A673 (cell line): ENCODE measurements at regions of chr9 and their contacts with region 1.

Region 1: DNA sequence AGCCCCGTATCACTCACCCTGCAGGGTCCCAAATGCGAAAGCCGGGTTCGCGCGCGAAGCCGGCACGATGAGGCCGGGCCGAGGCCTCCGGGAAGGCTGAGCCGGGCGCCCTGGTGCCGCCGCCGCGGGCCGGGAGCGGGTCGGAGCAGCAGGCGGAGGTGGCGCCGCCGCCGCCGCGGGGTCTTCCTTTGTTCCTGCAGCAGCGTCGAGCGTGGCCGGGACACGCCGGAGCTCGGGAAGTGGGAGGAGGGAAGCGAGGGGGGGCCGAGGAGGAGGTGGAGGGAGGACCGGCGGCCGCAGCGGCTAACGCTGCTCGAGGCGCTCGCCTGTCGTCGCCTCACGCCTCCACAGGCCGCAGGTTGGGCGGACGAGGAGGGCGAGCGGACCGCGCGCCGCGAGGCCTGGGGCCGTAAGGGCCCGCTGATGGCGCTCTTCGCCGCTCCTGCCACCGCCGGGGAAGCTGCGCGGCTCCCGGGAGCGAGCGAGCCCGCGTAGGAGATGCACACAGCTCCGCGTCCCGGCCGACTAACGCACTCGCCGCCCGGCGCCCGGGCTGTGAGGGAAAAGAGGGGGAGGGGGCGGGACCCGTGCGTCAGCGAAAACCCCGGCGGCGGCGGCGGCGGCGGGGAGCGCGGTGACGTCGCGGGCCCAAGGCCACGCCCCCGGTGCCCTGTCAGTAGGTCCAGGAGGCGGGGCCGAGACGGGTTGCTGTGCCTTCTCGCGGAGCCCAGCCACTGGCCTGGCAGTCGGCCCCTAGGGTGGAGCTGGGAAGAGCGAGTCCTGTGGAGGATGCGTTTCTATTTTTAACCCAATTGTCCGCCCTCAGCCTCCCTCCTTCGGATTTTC is at the start of gene ZFAND5:
- DNase-seq: peak; percentile 97
- H3K4me3 ChIP-seq: peak within 1 kb of the TSS; percentile 95
- H3K27ac ChIP-seq: peak within 1 kb of the TSS; percentile 97
- H3K4me1 ChIP-seq: peaks cover 24% of the 10 kb centered on the region
- H3K27me3 ChIP-seq: no peaks in the 10 kb centered on the region
- CTCF ChIP-seq: no peak
- total RNA-seq, gene ZFAND5: 169 and 194 TPM in 2 replicates

Region 2: DNA sequence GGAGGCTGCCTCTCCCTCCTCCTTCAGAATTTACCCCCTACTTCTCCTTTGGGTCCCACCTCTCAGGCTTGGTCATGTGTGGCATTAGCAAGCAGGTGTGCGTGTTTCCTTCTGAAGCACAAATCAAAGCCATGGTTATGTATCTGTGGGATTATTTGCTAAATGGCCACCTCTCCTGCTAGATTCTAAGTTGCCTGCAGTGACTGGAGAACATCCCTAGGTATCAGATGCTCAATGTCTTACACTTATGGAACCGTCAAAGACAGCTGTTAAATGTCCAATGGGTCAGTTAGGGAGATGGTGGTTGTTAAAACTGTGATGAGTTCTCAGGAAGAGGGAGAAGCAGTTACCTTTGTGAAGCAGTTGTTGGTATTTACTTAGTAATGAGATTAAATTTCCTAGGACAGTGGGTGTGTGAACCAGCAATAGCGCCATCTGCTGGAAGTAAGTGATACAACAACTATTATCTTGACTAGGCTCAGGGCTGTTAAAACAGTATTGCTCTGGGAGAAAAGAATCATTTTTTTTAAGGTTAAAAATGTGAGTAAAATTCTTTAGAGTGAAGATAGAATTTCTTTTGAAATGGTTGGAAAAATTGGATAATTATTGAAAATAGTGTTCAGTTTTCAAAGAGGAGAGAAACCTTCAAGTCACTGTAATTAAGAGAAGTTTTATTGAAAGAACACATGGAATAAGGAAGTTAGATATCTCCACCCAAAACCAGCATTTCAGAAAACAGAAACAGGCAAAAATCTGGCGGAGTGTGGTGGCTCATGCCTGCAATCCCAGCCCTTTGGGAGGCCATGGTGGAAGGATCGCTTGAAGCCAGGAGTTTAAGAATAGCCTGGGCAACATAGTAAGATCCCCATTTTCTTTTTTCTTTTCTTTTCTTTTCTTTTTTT is 227.9 kb after region 1 on chr9:
- CTCF ChIA-PET with region 1: no interaction called
- POLR2A ChIA-PET with region 1: interaction called, 4 read pairs
- intact Hi-C with region 1: loop called (anchors 2 kb)
- DNase-seq: peak; percentile 67
- H3K4me3 ChIP-seq: no peak overlapping the region
- H3K27ac ChIP-seq: no peak overlapping the region
- H3K4me1 ChIP-seq: no peaks in the 10 kb centered on the region
- H3K27me3 ChIP-seq: no peaks in the 10 kb centered on the region
- CTCF ChIP-seq: peak; percentile 83

Region 3: GRCh38 chr9:72661401-72662135 is 296.7 kb after region 1 on chr9:
- CTCF ChIA-PET with region 1: no interaction called
- POLR2A ChIA-PET with region 1: no interaction called
- intact Hi-C with region 1: no loop called
- DNase-seq: no peak
- H3K4me3 ChIP-seq: no peak overlapping the region
- H3K27ac ChIP-seq: no peak overlapping the region
- H3K4me1 ChIP-seq: no peaks in the 10 kb centered on the region
- H3K27me3 ChIP-seq: no peaks in the 10 kb centered on the region
- CTCF ChIP-seq: no peak

Region 4: GRCh38 chr9:72695365-72695764 is 330.5 kb after region 1 on chr9:
- CTCF ChIA-PET with region 1: no interaction called
- POLR2A ChIA-PET with region 1: no interaction called
- intact Hi-C with region 1: no loop called
- DNase-seq: no peak
- H3K4me3 ChIP-seq: no peak overlapping the region
- H3K27ac ChIP-seq: no peak overlapping the region
- H3K4me1 ChIP-seq: no peaks in the 10 kb centered on the region
- H3K27me3 ChIP-seq: no peaks in the 10 kb centered on the region
- CTCF ChIP-seq: no peak